GM10248 (cell line): ENCODE measurements at regions of chr12 and their contacts with region 1.

Region 1: DNA sequence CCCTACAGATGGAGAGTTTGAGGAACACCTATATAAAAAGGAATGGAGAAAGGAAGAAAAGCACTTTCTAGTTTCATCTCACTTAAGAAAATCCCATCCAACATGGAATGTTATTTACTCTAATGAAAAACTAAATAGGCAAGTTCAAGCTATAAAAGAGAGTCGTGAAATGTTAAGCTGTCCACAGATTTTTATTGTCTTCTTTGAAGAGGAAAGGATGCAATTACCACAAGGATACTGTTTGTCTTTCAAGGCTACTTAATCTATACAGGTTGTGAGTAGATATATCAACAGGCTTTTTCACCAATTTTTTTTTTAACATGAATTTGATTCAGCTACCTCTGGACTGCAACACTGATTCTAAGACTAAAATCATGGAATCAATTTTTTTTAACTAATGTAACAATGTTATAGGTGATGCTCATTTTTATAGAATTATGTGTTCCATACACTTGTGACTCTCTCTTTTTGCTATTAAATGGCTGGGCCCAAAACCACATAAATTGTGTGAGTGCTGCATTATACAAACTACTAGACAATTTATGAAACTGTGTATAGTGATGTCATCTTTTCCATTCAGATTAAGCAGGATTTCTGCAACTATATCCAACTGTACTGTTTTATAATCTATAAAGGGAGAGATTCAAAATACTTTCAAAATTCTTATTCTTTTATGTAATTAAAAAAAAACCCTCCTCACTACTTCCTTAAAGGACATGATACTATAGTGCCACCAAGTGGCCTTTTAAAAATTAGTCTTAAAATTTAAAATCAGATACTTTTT is 26.8 kb upstream of the BMAL2 start:
- DNase-seq: no peak
- CTCF ChIP-seq: peak; percentile 31

Region 2: DNA sequence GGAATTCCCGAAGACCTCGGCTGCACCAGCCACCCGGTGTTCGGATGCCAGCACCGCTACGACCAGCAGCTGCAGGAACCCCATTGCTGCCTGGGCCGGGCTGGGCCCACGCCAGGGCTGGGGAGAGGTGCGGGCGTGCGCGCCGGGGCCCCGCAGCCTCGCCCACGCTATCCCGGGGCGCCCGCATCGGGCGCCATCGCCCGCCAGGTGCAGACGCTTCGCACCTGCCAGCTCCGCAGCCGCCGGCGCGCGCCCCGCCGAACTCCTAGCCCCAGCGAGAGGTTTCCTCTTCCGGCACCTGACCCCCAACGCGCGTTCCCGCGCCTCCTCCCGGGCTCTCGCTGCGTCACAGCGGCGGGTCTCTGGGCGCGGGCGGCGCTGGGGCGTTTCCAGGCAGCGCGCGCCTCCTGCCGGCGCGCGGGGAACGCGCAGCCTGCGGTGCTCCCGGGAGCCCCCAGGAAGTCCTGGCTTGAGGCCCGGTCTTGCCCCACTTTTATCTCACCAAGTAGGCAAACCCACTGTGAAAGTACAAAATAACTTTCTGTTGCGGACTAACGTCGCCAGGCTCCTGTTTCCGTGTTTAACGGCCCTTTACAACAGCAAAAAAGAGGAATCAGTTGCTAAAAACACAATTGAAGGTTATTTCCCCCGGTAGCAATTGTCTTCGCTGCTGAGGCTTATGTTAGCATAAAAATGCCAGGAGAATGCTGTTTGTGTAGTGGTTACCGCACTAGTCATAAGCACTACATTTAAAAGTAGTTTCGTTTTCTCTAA is 291.6 kb before region 1 on chr12 and contains the start of gene TM7SF3:
- CTCF ChIA-PET with region 1: interaction called, 49 read pairs
- POLR2A ChIA-PET with region 1: no interaction called
- DNase-seq: peak; percentile 95
- CTCF ChIP-seq: peak; percentile 91

Region 3: DNA sequence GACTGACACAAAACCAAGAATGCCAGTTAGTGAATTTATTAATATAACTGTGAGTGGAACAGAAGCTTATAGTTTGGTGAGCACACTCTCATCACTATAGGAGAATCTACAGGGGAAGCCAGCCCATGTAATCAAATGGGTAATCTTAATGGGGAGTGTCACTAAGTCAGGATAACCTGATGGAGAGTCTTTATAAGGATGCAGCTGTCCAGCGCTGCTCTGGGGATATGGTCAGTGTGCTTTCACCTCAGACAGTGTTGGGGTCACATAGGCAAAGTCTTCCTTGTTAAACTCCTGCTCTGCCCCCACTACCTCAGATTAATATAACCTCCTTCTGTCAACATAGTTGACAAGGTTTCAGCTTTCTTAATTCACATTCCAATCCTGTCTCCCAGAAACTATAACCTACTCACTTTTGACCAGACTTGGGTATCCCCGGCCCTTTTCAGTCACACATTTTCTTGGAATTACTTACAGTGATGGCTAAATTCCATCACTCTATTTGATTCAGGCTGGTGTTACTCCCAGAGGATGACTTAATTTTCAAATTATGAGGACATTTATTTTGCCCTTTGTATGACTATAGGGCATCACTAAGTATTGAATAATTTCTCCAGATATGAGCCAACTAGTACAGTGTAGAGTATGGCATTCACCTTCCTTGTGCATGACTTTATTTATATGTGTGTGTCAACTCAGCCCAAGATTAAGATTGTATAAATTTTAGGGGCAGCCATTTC is 48.6 kb before region 1 on chr12:
- CTCF ChIA-PET with region 1: interaction called, 33 read pairs
- POLR2A ChIA-PET with region 1: no interaction called
- DNase-seq: no peak
- CTCF ChIP-seq: no peak

Region 4: GRCh38 chr12:27284751-27285150 is 21.1 kb before region 1 on chr12:
- CTCF ChIA-PET with region 1: interaction called, 28 read pairs
- POLR2A ChIA-PET with region 1: no interaction called
- DNase-seq: peak; percentile 29
- CTCF ChIP-seq: no peak

Region 5: GRCh38 chr12:27319409-27319808 is 13.5 kb after region 1 on chr12:
- CTCF ChIA-PET with region 1: interaction called, 63 read pairs
- POLR2A ChIA-PET with region 1: no interaction called
- DNase-seq: no peak
- CTCF ChIP-seq: no peak

Region 6: GRCh38 chr12:27534060-27534764 is 228.3 kb after region 1 on chr12:
- CTCF ChIA-PET with region 1: no interaction called
- POLR2A ChIA-PET with region 1: no interaction called
- DNase-seq: peak; percentile 45
- CTCF ChIP-seq: no peak